ENCODE measurements at regions of chr2 and their contacts with region 1.

Region 1: DNA sequence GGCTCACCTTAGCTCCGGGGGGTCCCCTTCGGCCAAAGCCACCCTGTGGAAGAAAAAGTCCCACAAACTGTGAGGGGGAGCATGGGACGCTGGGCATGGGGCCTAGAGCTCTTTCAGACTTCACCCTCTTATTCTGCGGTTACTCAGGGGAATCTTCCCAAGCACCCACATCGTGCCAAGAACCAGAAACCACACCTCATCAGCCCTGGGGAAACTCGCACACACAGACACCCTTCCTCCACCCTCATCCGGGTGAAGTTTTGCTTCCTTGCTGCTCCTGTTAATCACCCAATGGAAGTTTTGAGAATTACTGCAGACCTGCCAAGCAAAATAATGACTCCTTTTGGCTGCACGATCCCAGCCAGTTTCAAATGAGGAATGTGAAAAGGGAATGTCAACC is 59.1 kb downstream of the COL6A3 start:
- DNase-seq: no peak

Region 2: DNA sequence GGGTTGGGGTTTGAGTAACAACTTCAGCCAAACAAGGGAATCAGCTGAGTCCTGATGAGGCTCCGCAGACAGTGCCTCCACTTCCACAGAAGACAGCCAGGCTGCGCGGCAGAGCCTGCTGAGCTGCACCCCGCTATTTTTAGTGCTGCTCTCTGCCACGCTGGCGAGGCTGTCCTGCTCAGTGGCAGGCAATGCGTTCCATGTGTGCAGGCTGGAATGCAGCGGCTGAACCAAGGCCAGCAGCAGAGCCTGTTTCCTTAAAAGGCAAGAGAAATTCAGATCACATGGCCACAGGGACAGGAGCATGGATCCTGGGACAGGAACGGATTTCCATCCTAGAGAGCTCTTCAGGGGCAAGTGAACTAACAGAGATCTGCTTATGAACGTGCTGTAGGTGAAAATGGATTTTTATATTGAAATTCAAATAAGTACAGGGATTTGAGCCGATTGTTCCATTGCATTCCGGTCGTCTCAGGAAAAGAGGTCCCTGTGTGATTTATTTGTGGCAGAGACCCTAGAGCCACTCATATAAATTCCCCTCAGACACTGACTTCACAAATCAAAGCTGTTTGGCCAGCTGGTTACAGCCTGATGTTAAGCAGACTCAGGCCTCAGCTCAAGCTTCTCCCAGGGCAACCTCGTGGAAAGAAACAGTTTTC is 39.6 kb before region 1 on chr2:
- intact Hi-C with region 1: loop called in 1 of 2 experiments (anchors 5 kb)
- DNase-seq: peak; percentile 94

Region 3: GRCh38 chr2:237519506-237520245 is 164.8 kb after region 1 on chr2:
- intact Hi-C with region 1: no loop called
- DNase-seq: no peak